ENCODE measurements at regions of chr1 and their contacts with region 1.

Region 1: DNA sequence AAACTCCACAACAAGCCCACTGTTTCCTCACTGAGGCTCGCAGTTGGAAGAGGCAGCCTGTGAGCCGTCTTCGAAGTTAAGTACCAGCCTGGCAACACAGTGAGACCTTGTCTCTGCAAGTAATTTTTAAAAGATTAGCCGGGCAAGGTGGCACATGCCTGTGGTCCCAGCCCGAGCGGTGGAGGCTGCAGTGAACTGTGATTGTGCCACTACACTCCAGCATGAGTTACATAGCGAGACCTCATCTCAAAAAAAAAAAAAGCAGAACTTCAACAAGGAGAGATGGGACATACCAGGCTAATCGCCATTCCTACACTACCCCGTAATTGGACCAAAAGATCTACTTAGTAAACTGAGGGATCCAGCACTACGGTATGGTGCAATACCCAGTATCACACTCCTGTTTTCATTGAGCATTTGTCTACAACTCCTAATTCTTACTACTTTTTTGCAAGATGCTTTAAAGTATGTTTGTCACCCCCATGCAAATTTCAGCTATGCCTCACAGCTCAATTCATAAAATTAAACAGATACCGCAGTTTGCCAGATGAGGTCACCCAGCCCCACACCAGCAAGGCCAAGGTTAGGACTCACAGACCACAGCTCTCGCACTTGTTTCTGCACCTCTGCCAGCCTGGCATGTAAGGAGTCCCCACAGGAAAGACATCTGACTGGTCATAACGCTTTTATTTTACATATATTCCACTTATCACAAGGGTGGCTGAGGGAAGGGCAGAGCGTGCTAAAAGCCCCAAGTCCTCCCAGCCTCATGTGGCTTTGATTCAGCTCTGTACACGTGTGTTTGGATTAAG is 21.0 kb downstream of the SDE2 start:
- DNase-seq: no peak
- H3K4me3 ChIP-seq: no peak overlapping the region
- H3K27ac ChIP-seq: no peak overlapping the region
- H3K4me1 ChIP-seq: no peaks in the 10 kb centered on the region
- H3K27me3 ChIP-seq: no peaks in the 10 kb centered on the region
- CTCF ChIP-seq: no peak

Region 2: DNA sequence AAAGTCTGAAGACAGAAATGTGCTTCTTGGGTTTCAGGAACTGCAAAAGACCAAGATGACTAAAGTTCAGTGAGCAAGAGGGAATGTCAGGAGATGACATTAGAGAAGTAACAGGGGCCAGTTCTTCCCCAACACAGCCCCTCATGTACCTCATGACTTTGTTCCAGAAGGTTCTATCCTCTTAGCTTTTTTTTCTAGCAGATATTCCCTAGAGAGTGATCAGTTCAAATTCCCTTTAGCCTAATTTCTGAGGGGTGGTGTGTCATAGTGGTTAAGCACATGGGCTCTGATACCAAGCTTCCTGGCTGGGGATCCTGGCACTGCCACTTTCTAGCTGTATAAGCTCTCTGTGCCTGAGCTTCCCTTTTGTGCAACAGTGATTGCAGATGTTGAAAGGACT is 658.3 kb before region 1 on chr1:
- intact Hi-C with region 1: loop called (anchors 10 kb)
- DNase-seq: no peak
- H3K4me3 ChIP-seq: no peak overlapping the region
- H3K27ac ChIP-seq: no peak overlapping the region
- H3K4me1 ChIP-seq: no peaks in the 10 kb centered on the region
- H3K27me3 ChIP-seq: peaks cover 0 to 9% of the 10 kb centered on the region in 2 donors
- CTCF ChIP-seq: no peak

Region 3: GRCh38 chr1:225911191-225912130 is 66.7 kb before region 1 on chr1:
- intact Hi-C with region 1: loop called (anchors 10 kb)
- DNase-seq: peak; percentile 50 to 77
- H3K4me3 ChIP-seq: peak overlapping the region in 1 of 2 donors; percentile 12
- H3K27ac ChIP-seq: no peak overlapping the region
- H3K4me1 ChIP-seq: peaks cover 0 to 9% (median 7%) of the 10 kb centered on the region in 4 donors
- H3K27me3 ChIP-seq: no peaks in the 10 kb centered on the region
- CTCF ChIP-seq: peak; percentile 88 to 95